ENCODE measurements at regions of chr12 and their contacts with region 1.

Region 1: GRCh38 chr12:6688999-6689882 is at the start of gene ZNF384:
- DNase-seq: peak; percentile 97
- H3K4me3 Mint-ChIP-seq: peak within 1 kb of the TSS; percentile 87
- H3K27ac Mint-ChIP-seq: peak within 1 kb of the TSS; percentile 91
- H3K4me1 Mint-ChIP-seq: peaks cover 55% of the 10 kb centered on the region
- H3K27me3 Mint-ChIP-seq: no peaks in the 10 kb centered on the region
- total RNA-seq, gene ZNF384: 69.5 to 78.1 TPM

Region 2: GRCh38 chr12:6607751-6608591 is 81.3 kb before region 1 on chr12:
- CTCF ChIA-PET with region 1: interaction called, 7 read pairs
- POLR2A ChIA-PET with region 1: interaction called, 20 read pairs
- DNase-seq: peak; percentile 72
- H3K4me3 Mint-ChIP-seq: no peak overlapping the region
- H3K27ac Mint-ChIP-seq: no peak overlapping the region
- H3K4me1 Mint-ChIP-seq: peaks cover 53% of the 10 kb centered on the region
- H3K27me3 Mint-ChIP-seq: no peaks in the 10 kb centered on the region

Region 3: GRCh38 chr12:6620137-6620884 is 68.9 kb before region 1 on chr12:
- CTCF ChIA-PET with region 1: interaction called, 23 read pairs
- POLR2A ChIA-PET with region 1: interaction called, 7 read pairs
- DNase-seq: peak; percentile 60
- H3K4me3 Mint-ChIP-seq: peak overlapping the region; percentile 54
- H3K27ac Mint-ChIP-seq: no peak overlapping the region
- H3K4me1 Mint-ChIP-seq: peaks cover 16% of the 10 kb centered on the region
- H3K27me3 Mint-ChIP-seq: no peaks in the 10 kb centered on the region

Region 4: DNA sequence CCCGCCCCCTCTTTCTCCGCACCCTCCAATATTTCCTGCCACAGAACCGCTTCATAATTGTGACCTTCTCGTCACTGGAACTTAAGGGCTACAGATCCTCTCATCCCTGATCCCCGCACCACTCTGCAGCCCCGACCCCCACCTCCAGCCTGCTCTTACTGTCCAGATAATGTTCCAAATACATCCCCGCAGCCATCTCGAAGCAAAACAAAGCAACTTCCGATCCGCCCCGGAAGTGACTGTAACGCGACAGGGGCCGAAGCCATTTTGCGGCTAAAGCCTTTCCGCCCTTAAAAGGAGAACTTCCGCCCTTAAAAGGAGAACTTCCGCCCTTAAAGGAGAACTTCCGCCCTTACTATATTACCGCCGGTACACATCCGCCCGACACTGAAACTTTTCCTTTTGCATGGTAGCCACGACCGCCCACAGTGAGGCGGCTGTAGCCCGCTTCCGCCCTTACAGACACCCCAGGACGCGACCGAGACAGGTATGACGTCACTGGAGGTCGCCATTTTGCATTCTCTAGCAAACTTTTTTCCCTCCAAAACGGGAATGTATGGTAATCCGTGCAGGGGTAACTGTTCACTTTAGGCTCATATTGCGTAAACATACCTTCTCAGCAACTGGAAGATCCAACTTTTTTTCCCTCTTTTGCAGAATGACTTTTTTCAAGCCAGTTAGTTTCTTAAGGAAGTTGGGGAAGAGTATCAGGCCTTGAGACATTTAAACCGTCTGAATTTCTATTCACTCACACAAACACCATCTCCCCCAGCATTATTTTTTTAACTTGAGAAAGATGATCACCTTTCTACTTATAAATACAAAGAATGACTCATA is 26.1 kb before region 1 on chr12 and contains the start of gene ING4:
- CTCF ChIA-PET with region 1: interaction called, 12 read pairs
- POLR2A ChIA-PET with region 1: interaction called, 36 read pairs
- DNase-seq: peak; percentile 98
- H3K4me3 Mint-ChIP-seq: peak within 1 kb of the TSS; percentile 96
- H3K27ac Mint-ChIP-seq: peak within 1 kb of the TSS; percentile 86
- H3K4me1 Mint-ChIP-seq: peaks cover 30% of the 10 kb centered on the region
- H3K27me3 Mint-ChIP-seq: no peaks in the 10 kb centered on the region
- total RNA-seq, gene ING4: 32.2 to 33.8 TPM

Region 5: DNA sequence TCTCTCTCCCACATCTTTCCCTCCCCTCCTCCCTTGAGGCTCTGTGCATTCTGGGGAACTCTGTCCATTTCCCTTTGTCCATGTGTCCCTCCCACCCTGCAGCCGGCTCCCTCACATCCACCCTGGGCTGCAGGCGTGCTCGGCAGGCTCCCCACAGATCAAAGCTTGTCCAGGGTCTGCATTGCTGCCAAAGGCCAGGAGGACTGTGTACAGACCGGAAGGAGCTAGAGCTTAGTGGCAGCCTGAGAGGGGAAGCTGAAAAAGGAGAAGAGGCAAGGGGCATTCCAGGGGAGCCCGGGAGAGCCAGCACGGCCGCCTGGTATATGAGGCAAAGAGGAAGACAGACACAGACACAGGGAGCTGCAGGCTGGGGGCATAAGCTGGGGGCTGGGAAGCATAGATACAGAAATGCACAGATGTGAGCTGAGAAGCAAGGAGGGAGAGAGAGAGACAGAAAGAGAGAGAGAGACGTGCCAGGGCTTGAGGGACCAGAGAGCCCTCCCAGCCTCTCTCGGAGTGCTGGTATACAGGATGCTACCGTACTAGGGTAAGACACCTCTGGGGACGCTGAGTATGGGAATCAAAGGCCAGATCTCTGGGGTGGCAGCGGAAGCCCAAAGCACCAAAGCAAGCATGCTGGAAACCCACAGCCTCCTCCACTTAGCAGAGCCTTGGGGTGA is 103.4 kb after region 1 on chr12:
- CTCF ChIA-PET with region 1: interaction called, 5 read pairs
- POLR2A ChIA-PET with region 1: interaction called, 18 read pairs
- DNase-seq: peak; percentile 70
- H3K4me3 Mint-ChIP-seq: peak overlapping the region; percentile 93
- H3K27ac Mint-ChIP-seq: peak overlapping the region; percentile 90
- H3K4me1 Mint-ChIP-seq: peaks cover 51% of the 10 kb centered on the region
- H3K27me3 Mint-ChIP-seq: no peaks in the 10 kb centered on the region

Measured in activated CD4-positive, alpha-beta memory T cell treated with anti-CD3 and anti-CD28 coated beads, Interleukin-2, amount 10 ng/mL, durations not matched to agents 7 days and 5 days (primary cell).